Lower leg skin (tissue), 4 donors: ENCODE measurements at regions of chr10 and their contacts with region 1.

Region 1: GRCh38 chr10:2137549-2138174 is 400.3 kb upstream of the ADARB2 start:
- DNase-seq: no peak
- H3K4me3 ChIP-seq: no peak overlapping the region
- CTCF ChIP-seq: no peak
- POLR2A ChIP-seq: no peak

Region 2: DNA sequence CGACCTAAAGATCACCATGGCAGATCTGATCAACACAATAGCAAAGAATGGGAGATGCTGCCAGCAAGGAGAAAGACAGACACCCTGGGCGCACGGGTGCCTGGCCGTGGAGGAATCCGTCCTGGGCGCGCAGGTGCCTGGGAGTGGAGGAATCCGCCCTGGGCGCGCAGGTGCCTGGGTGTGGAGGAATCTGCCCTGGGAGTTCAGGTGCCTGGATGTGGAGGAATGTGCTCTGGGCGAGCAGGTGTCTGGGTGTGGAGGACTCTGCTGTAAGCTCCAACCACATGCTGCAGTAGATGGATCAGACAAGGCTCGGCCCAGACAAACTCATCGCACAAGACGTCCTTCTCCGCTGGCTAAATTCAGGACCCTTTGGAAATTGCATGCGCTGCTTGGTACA is 54.1 kb before region 1 on chr10:
- intact Hi-C with region 1: loop called (anchors 1 kb)
- DNase-seq: no peak
- H3K4me3 ChIP-seq: no peak overlapping the region
- CTCF ChIP-seq: no peak
- POLR2A ChIP-seq: no peak

Region 3: GRCh38 chr10:2196272-2196671 is 58.6 kb after region 1 on chr10:
- intact Hi-C with region 1: no loop called
- DNase-seq: no peak
- H3K4me3 ChIP-seq: no peak overlapping the region
- CTCF ChIP-seq: no peak
- POLR2A ChIP-seq: no peak